BJ (cell line): ENCODE measurements at regions of chr10 and their contacts with region 1.

Region 1: DNA sequence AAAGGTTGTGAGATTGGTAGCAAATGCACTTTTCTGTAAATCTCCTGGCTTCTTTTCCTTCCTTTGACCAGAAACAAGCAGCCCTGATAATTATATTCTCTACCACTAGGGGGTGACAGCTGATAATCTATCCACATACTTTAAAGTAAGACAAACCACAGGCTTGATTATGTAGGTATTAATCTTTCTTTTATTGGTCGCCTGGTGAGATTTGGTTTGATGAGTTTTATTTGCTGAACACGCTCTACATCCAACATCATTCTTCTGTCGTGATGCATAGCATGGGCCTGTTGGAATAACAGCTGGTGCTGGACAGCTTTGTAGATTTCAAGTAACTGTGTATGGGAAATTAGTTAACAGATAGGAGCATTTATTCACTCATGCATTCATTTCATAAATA is 63.5 kb downstream of the ZNF365 start:
- DNase-seq: peak; percentile 89
- H3K4me3 ChIP-seq: no peak overlapping the region
- H3K27me3 ChIP-seq: no peaks in the 10 kb centered on the region
- CTCF ChIP-seq: peak; percentile 66

Region 2: DNA sequence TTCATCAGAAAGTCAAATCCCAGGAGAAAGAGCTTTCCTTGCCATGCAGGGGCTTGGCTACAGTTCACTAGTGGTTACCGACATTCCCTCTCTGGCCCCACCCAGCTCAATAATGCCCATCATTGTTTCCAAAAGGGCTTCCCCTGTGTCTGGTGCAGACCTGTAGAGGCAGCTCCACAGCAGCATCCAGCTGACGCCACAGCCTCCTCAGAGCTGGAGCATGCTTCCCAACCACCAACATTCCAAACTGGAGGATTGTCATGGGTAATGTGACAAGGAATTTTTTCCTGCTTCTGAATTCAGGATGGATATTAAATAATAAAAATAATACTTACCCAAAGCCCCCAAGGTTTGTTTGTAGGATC is 13.9 kb after region 1 on chr10:
- CTCF ChIA-PET with region 1: interaction called, 35 read pairs
- POLR2A ChIA-PET with region 1: no interaction called
- DNase-seq: no peak
- H3K4me3 ChIP-seq: no peak overlapping the region
- H3K27me3 ChIP-seq: no peaks in the 10 kb centered on the region
- CTCF ChIP-seq: no peak

Region 3: GRCh38 chr10:62620491-62620890 is 182.8 kb after region 1 on chr10:
- CTCF ChIA-PET with region 1: no interaction called
- POLR2A ChIA-PET with region 1: no interaction called
- DNase-seq: no peak
- H3K4me3 ChIP-seq: no peak overlapping the region
- H3K27me3 ChIP-seq: no peaks in the 10 kb centered on the region
- CTCF ChIP-seq: no peak